ENCODE measurements at regions of chr15 and their contacts with region 1.

Region 1: DNA sequence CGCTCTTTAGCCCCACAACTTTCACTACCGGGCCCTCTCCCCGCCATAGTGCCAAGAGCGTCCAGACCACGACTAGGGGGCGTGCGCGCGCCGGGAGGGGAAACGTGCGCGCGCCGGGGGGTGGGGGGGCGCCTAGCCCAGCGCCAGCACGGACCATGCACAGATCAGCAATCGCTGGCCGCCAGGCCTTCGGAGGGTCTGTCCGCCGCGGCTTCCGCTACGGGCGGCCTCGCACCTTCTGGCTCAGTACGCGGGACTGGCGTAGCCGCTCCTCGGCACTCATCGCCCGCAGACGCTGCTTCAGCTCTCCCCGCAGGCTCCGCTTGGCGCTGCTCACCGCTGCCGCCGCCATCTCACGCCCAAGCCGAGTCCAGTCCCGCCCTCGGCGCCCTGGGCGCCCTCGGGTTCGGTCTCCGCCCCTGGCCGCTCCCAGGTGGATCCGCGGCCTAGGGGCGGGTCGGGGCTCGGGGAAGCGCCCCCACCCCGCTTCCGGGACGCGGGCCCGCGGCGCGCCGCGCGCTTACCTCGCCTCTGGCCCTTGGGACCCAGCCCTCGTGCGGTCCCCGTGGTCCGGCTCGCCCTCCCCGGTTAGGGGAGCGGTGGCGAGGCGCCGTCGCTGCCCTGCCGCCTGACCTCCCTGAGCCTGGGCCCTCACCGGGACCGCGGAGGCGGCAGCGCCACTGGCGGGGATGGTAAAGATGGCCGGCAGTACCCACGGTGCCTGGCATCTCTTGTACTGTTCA is at the start of gene MTHFS:
- DNase-seq: peak; percentile 76
- H3K4me3 Mint-ChIP-seq: peak within 1 kb of the TSS; percentile 100
- H3K27ac Mint-ChIP-seq: peak within 1 kb of the TSS; percentile 100
- H3K4me1 Mint-ChIP-seq: peaks cover 42% of the 10 kb centered on the region
- H3K27me3 Mint-ChIP-seq: no peaks in the 10 kb centered on the region
- total RNA-seq, gene MTHFS: 44.8 to 47.0 TPM

Region 2: DNA sequence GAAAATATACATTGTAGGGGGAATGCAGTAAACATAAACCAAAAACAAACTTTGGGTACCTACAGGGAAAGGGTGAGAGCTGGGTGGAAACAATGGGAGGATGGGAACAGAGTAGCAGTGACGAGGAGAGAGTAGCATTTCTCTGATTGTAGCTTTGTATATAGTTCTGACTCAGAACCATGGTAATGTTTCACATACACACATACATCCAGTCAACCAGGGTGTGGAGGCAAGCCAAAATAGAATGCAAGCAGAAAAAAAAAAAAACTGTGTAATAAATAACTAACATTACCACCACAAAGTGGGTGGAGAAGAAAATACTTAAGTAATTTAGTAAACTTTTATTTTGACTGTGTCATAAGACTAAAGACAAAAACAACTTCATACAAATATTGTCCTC is 47.0 kb after region 1 on chr15:
- CTCF ChIA-PET with region 1: no interaction called
- intact Hi-C with region 1: no loop called
- DNase-seq: no peak
- H3K4me3 Mint-ChIP-seq: no peak overlapping the region
- H3K27ac Mint-ChIP-seq: no peak overlapping the region
- H3K4me1 Mint-ChIP-seq: peaks cover 16% of the 10 kb centered on the region
- H3K27me3 Mint-ChIP-seq: no peaks in the 10 kb centered on the region

Region 3: GRCh38 chr15:79978655-79979514 is 82.1 kb after region 1 on chr15:
- CTCF ChIA-PET with region 1: no interaction called
- intact Hi-C with region 1: loop called (anchors 1 kb)
- DNase-seq: peak; percentile 69
- H3K4me3 Mint-ChIP-seq: peak overlapping the region; percentile 41
- H3K27ac Mint-ChIP-seq: peak overlapping the region; percentile 91
- H3K4me1 Mint-ChIP-seq: peaks cover 49% of the 10 kb centered on the region
- H3K27me3 Mint-ChIP-seq: no peaks in the 10 kb centered on the region

Region 4: DNA sequence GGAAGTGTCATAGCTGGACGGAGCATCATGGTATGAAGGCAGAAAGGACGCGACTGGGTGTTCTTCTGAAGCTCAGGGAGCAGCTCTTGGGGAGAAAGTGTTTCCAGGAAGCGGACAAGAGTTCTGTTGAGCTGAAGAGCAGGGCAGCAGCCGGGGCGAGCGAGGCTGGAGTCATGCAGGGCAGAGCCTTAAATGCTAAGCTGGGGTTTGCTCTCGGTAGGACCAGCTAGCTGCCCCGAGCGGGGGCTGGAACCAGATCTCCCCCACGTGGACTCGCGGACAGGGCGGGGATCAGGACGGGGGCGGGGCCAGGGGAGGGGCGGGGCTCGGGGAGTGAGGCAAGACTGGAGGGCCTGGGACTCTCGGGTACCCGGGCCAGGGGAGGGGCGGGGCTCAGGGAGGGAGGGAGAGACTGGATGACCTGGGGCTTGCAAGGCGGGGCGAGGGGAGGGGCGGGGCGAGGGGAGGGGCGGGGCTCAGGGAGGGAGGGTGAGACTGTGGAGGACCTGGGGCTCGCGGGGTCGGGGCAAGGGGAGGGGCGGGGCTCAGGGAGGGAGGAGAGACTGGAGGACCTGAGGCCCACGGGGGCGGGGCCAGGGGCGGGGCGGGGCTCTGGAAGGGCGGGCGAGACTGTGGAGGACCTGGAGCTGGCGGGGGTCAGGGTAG is 255.5 kb after region 1 on chr15:
- CTCF ChIA-PET with region 1: no interaction called
- intact Hi-C with region 1: loop called (anchors 1 kb)
- DNase-seq: peak; percentile 96
- H3K4me3 Mint-ChIP-seq: peak overlapping the region; percentile 87
- H3K27ac Mint-ChIP-seq: peak overlapping the region; percentile 36
- H3K4me1 Mint-ChIP-seq: peaks cover 19% of the 10 kb centered on the region
- H3K27me3 Mint-ChIP-seq: no peaks in the 10 kb centered on the region

Region 5: GRCh38 chr15:80173022-80173759 is 276.4 kb after region 1 on chr15:
- CTCF ChIA-PET with region 1: no interaction called
- intact Hi-C with region 1: loop called (anchors 5 kb)
- DNase-seq: peak; percentile 89
- H3K4me3 Mint-ChIP-seq: no peak overlapping the region
- H3K27ac Mint-ChIP-seq: no peak overlapping the region
- H3K4me1 Mint-ChIP-seq: no peaks in the 10 kb centered on the region
- H3K27me3 Mint-ChIP-seq: no peaks in the 10 kb centered on the region